A549 (cell line): ENCODE measurements at regions of chr5 and their contacts with region 1.

Region 1: DNA sequence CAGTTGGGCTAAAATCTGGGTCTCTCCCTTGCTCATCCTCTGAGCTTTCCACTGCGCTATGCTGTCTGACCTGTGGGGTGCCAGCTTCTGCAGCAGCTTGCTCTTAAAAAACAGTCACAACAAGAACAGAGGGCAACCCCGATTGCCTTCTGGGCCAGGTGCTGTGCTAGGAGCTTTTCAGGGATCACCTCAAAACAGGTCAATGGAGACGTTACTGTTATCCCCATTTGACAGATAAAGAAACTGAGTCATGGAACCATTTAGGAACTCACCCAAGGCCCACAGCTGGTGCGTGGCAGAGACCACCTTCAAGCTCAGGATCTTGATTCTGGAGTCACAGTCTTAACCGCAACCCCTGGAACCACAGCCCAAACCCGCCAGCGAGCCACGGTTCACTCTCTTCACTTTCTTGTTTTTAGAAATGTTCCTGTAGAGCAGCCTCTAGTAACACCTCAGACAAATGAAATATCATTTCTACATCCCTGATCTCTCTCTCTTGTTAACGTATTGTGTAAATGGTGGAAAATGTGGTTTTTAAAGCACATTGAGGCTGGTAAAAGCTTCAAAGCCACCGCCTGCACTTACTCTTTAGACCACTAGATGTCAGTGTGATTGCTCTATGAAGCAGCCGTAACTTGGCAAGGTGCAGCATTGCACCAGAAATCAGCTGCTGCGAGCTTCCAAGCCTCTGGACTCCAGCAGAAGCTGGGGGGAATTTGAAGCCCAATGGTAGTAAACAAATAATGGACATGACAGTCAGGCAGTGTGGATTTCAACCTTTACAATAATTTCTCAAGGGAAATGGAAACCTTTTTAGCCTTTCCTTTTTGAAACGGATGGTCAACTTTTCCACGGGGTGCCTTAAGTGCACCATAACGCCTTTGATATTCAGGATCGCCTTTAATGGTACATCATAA is 1.7 kb downstream of the FYB1 start:
- DNase-seq: peak; percentile 76 to 83
- ATAC-seq: peak; percentile 80 to 90
- H3K4me3 ChIP-seq: no peak overlapping the region
- H3K27ac ChIP-seq: peak overlapping the region in 1 of 2 experiments; percentile 34; a peak in 2 of 6 replicates
- H3K4me1 ChIP-seq: peaks cover 11% of the 10 kb centered on the region
- CTCF ChIP-seq: peak; percentile 89
- EP300 ChIP-seq: no peak
- POLR2A ChIP-seq: no peak
- RAD21 ChIP-seq: peak; percentile 91 to 93

Region 2: DNA sequence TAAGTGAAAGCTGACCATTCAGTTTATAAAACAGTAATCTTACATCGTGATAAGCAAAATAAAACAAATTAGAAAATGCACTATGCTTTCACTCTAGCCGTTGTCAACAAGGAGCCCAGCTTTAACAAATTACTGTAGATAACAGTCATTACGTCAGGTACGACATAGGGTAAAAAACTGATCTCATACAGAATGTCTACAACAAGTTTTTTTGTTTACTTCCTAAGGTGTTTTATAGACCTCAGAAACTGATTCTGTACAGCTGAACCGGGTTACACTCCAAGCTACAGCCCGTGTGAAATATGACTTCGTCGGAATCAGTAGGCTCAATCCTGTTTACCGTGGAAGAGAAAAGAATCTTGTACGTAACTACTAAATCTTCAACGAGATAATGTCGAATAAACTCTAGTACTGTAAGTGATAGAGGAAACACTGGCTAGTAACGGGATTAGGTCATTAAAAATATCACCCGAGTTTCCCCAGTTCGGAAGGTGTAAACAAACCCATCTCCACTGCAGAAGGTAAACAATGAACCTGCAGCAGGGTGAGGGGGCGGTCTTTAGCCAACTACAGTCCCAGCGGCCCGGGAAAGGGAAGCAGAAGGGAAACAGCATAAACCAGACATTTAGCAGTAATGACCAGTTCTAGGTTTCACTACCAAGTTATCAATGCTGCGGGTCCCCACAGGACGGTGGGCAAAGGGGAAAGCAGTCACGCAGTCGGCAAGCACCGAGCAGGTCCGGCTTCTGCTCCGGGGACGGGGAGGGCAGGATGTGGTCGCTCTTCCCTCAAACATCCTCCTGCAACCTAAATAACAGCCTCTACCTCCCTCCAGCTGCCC is 144.5 kb before region 1 on chr5:
- CTCF ChIA-PET with region 1: no interaction called
- POLR2A ChIA-PET with region 1: no interaction called
- DNase-seq: peak in 1 of 2 experiments; percentile 53
- ATAC-seq: peak; percentile 23 to 30; a peak in 5 of 6 replicates
- H3K4me3 ChIP-seq: peak overlapping the region; percentile 90
- H3K27ac ChIP-seq: peak overlapping the region; percentile 89 to 98
- H3K4me1 ChIP-seq: peaks cover 40% of the 10 kb centered on the region
- CTCF ChIP-seq: no peak
- EP300 ChIP-seq: no peak
- POLR2A ChIP-seq: no peak
- RAD21 ChIP-seq: 0 out of 5 replicates have a peak, but pooled peaks of 1 of the 2 experiments have one; percentile 13

Region 3: GRCh38 chr5:39138892-39139291 is 78.7 kb before region 1 on chr5:
- CTCF ChIA-PET with region 1: interaction called, 19 read pairs
- POLR2A ChIA-PET with region 1: no interaction called
- DNase-seq: peak; percentile 51 to 88
- ATAC-seq: peak; percentile 87
- H3K4me3 ChIP-seq: no peak overlapping the region
- H3K27ac ChIP-seq: peak overlapping the region in 1 of 2 experiments; percentile 71; a peak in 3 of 6 replicates
- H3K4me1 ChIP-seq: peaks cover 39% of the 10 kb centered on the region
- CTCF ChIP-seq: no peak
- EP300 ChIP-seq: peak in 1 of 2 experiments; percentile 82; a peak in 1 of 5 replicates
- POLR2A ChIP-seq: no peak
- RAD21 ChIP-seq: peak; percentile 24 to 58; a peak in 4 of 5 replicates

Region 4: DNA sequence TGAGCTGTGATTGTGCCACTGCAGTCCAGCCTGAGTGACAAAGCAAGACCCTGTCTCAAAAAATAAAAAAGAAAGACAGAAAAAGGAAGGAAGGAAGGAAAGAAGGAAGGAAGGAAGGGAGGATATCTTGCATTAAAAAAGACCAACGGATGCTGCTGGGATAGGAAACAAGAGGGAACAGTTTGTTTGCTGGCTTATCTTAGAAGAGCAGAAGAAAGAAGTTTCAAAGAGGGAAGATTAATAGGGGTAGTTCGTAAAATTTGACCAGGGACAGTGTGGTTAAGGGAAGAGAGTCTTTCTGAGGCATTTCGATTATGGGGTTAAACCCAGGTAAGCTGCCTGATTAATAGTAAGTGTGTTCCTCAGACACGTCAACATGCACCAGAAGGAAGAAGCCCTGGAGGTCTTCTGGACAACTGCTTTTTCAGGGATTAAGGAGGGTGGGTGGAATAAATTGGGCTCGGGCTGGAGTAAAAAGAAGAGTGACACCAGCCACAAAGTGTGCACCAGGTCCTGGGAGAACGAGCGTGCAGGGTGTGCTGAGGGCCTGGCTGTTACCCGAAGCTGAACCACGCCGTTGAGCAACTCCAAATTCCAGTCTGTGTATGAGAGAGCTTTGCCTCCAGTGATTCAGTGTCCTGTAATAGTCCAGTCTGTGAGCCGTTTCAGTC is 23.0 kb before region 1 on chr5:
- CTCF ChIA-PET with region 1: interaction called, 21 read pairs
- POLR2A ChIA-PET with region 1: no interaction called
- DNase-seq: peak; percentile 49 to 84
- ATAC-seq: peak; percentile 87 to 90
- H3K4me3 ChIP-seq: no peak overlapping the region
- H3K27ac ChIP-seq: peak overlapping the region; percentile 84 to 92
- H3K4me1 ChIP-seq: peaks cover 90% of the 10 kb centered on the region
- CTCF ChIP-seq: no peak
- EP300 ChIP-seq: peak; percentile 30 to 36; a peak in 2 of 5 replicates
- POLR2A ChIP-seq: no peak
- RAD21 ChIP-seq: no peak

Region 5: GRCh38 chr5:39240750-39241149 is 23.1 kb after region 1 on chr5:
- CTCF ChIA-PET with region 1: interaction called, 11 read pairs
- POLR2A ChIA-PET with region 1: no interaction called
- DNase-seq: no peak
- ATAC-seq: no peak
- H3K4me3 ChIP-seq: no peak overlapping the region
- H3K27ac ChIP-seq: no peak overlapping the region
- H3K4me1 ChIP-seq: no peaks in the 10 kb centered on the region
- CTCF ChIP-seq: no peak
- EP300 ChIP-seq: no peak
- POLR2A ChIP-seq: no peak
- RAD21 ChIP-seq: no peak

Region 6: GRCh38 chr5:39337252-39337915 is 119.8 kb after region 1 on chr5:
- CTCF ChIA-PET with region 1: interaction called, 10 read pairs
- POLR2A ChIA-PET with region 1: no interaction called
- DNase-seq: no peak
- ATAC-seq: no peak
- H3K4me3 ChIP-seq: no peak overlapping the region
- H3K27ac ChIP-seq: no peak overlapping the region
- H3K4me1 ChIP-seq: no peaks in the 10 kb centered on the region
- CTCF ChIP-seq: no peak
- EP300 ChIP-seq: no peak
- POLR2A ChIP-seq: no peak
- RAD21 ChIP-seq: no peak

Region 7: GRCh38 chr5:39570403-39571027 is 352.9 kb after region 1 on chr5:
- CTCF ChIA-PET with region 1: interaction called, 26 read pairs
- POLR2A ChIA-PET with region 1: no interaction called
- DNase-seq: peak; percentile 10 to 50
- ATAC-seq: peak; percentile 59 to 65; a peak in 3 of 6 replicates
- H3K4me3 ChIP-seq: no peak overlapping the region
- H3K27ac ChIP-seq: peak overlapping the region in 1 of 2 experiments; percentile 56; a peak in 3 of 6 replicates
- H3K4me1 ChIP-seq: peaks cover 5% of the 10 kb centered on the region; the same call in 1 of the 3 replicates
- CTCF ChIP-seq: peak; percentile 80
- EP300 ChIP-seq: no peak
- POLR2A ChIP-seq: no peak
- RAD21 ChIP-seq: peak; percentile 79 to 82